Cardiac septum (tissue), 1 donor: ENCODE measurements at regions of chr7 and their contacts with region 1.

Region 1: GRCh38 chr7:84188786-84189405 is 5.7 kb downstream of the SEMA3A start:
- DNase-seq: no peak

Region 2: GRCh38 chr7:83976295-83976694 is 212.6 kb before region 1 on chr7:
- intact Hi-C with region 1: loop called (anchors 10 kb)
- DNase-seq: no peak

Region 3: GRCh38 chr7:84139986-84140729 is 48.7 kb before region 1 on chr7:
- intact Hi-C with region 1: no loop called
- DNase-seq: no peak

Region 4: DNA sequence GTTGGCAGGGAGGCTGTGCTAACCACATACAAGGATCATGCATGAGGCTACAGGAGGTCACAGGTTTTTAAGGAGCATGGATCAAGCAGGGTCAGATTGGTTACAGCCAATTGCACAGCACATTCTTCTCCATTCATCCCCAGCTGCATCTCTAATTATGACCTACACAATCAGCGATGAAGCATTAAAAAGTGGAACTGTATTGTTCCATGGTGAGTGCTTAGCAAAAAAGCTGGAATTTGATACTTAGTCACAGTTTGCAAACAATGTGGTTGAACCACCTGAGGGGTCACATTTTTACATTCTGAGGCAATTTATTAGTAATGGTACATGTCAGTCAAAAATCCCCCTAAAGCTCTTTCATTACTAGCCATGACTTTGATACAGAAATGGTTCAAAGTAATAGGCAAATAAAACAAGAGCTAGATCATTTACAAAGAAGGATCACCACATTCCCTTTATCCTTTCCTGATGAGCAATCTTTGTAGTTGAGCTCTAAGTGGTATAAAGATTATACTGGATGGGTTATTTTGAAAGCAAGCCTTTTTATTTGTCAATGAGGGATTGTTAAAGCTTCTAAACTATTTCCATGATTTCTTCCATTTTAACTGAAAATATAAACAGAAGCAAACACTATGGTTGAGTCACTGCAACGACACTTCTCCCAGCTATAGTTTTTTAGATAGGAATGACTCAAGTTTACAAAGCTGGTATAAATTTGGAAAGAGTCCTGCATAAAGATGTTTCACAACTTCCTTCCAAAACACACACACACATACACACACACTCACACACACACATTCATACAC is 223.5 kb after region 1 on chr7:
- intact Hi-C with region 1: no loop called
- DNase-seq: no peak